Ascending aorta (tissue), 2 donors: ENCODE measurements at regions of chr3 and their contacts with region 1.

Region 1: DNA sequence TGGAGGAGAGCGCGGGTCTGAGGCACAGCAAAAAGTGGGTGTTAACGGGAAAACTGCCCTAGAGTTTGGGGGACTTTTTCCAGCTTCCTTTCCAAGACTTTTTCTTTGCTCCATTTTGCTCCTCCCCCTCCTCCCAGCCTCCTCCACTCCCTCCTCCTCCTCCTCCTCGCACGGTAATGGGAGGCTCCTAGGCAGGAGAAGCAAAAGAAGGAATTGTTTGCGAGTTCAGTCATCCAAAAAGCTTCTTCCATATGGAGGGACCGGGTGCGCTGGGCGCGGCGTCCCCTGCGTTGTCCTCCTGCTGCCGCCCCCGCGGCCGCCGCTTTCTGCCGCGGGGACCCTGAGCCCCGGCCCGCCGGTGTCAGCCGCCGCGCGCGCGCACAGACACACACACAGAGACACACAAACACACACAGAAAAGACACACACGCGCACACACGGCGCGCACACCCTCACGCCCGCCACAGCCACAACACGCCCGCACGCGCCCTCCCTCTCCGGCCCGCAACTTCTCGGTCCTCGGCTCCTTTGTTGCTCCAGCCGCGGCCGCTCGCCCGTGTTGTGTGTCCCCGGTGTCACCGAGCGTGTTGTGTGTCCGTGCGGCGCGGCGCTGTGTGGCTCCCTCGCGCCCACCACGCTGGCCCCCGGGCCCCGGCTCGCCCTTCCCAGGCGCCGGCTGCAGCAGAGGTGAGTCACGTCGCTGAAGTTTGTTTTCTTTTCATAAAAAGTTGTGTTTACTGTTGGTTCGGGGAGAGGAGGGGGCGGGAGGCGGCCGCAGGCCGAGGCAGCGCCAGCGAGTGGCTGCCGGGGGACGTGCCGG is at the start of gene BOC:
- DNase-seq: no peak
- H3K4me3 ChIP-seq: peak within 1 kb of the TSS; percentile 70 to 94
- H3K27ac ChIP-seq: peak within 1 kb of the TSS; percentile 85 to 90
- H3K4me1 ChIP-seq: peaks cover 0 to 4% of the 10 kb centered on the region in 2 donors
- H3K27me3 ChIP-seq: no peaks in the 10 kb centered on the region
- CTCF ChIP-seq: no peak
- total RNA-seq, gene BOC: 31.3 TPM

Region 2: DNA sequence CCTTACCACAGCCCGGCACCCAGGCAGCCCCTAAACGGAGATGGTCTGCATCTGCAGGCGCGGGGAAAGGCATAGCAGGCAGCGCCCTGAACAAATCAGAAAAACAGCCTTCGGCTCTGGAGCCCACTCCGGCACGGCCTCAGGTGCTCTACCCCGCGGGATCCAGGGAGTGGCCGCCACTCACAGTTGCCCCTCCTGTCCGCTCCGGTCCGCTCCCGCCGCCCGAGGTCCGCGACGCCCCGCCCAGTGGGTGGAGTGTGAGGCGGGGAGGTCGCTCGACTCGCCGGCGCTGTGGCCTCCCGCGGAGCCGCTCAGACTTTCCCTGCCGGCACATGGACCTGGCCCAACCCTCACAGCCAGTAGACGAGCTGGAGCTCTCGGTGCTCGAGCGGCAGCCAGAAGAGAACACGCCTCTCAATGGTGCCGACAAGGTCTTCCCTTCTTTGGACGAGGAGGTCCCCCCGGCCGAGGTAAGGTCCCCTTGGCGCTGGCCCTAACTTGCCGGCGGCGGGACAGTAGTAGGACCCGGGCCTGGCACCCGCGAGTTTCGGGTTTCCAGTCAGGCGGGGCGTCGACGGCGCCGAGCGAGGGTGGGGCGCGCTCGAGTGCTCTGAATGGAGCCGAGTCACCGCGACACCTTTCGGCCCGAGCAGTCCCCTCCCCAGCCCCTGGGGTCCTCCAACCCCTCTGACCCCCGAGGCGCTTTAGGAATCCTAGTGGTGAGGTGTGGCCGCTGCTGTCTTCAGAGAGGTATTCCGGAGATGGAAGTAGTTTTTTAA is 1125.3 kb before region 1 on chr3 and contains the start of gene C3orf52:
- intact Hi-C with region 1: loop called (anchors 5 kb)
- DNase-seq: peak; percentile 49 to 89
- H3K4me3 ChIP-seq: peak within 1 kb of the TSS; percentile 74 to 88
- H3K27ac ChIP-seq: peak within 1 kb of the TSS; percentile 60 to 74
- H3K4me1 ChIP-seq: peaks cover 0 to 15% of the 10 kb centered on the region in 2 donors
- H3K27me3 ChIP-seq: no peaks in the 10 kb centered on the region
- CTCF ChIP-seq: no peak
- total RNA-seq, gene C3orf52: 0.32 TPM

Region 3: GRCh38 chr3:113057117-113057516 is 154.4 kb before region 1 on chr3:
- intact Hi-C with region 1: no loop called
- DNase-seq: no peak
- H3K4me3 ChIP-seq: no peak overlapping the region
- H3K27ac ChIP-seq: no peak overlapping the region
- H3K4me1 ChIP-seq: peaks cover 0 to 1% of the 10 kb centered on the region in 2 donors
- H3K27me3 ChIP-seq: no peaks in the 10 kb centered on the region
- CTCF ChIP-seq: no peak

Region 4: GRCh38 chr3:113264283-113265131 is 53.0 kb after region 1 on chr3:
- intact Hi-C with region 1: loop called (anchors 5 kb)
- DNase-seq: no peak
- H3K4me3 ChIP-seq: no peak overlapping the region
- H3K27ac ChIP-seq: no peak overlapping the region
- H3K4me1 ChIP-seq: peaks cover 0 to 12% of the 10 kb centered on the region in 2 donors
- H3K27me3 ChIP-seq: no peaks in the 10 kb centered on the region
- CTCF ChIP-seq: no peak

Region 5: GRCh38 chr3:113275929-113276750 is 64.6 kb after region 1 on chr3:
- intact Hi-C with region 1: loop called (anchors 5 kb)
- DNase-seq: peak in 1 of 2 donors; percentile 81
- H3K4me3 ChIP-seq: peak overlapping the region; percentile 3 to 54
- H3K27ac ChIP-seq: peak overlapping the region; percentile 81 to 87
- H3K4me1 ChIP-seq: peaks cover 0 to 14% of the 10 kb centered on the region in 2 donors
- H3K27me3 ChIP-seq: no peaks in the 10 kb centered on the region
- CTCF ChIP-seq: peak in 1 of 3 experiments; percentile 23

Region 6: GRCh38 chr3:113287803-113288648 is 76.5 kb after region 1 on chr3:
- intact Hi-C with region 1: loop called (anchors 1 kb)
- DNase-seq: peak in 1 of 2 donors; percentile 81
- H3K4me3 ChIP-seq: no peak overlapping the region
- H3K27ac ChIP-seq: peak overlapping the region in 1 of 2 donors; percentile 3
- H3K4me1 ChIP-seq: no peaks in the 10 kb centered on the region
- H3K27me3 ChIP-seq: no peaks in the 10 kb centered on the region
- CTCF ChIP-seq: peak; percentile 96 to 99 (median 98)